ENCODE measurements at regions of chr14 and their contacts with region 1.

Region 1: DNA sequence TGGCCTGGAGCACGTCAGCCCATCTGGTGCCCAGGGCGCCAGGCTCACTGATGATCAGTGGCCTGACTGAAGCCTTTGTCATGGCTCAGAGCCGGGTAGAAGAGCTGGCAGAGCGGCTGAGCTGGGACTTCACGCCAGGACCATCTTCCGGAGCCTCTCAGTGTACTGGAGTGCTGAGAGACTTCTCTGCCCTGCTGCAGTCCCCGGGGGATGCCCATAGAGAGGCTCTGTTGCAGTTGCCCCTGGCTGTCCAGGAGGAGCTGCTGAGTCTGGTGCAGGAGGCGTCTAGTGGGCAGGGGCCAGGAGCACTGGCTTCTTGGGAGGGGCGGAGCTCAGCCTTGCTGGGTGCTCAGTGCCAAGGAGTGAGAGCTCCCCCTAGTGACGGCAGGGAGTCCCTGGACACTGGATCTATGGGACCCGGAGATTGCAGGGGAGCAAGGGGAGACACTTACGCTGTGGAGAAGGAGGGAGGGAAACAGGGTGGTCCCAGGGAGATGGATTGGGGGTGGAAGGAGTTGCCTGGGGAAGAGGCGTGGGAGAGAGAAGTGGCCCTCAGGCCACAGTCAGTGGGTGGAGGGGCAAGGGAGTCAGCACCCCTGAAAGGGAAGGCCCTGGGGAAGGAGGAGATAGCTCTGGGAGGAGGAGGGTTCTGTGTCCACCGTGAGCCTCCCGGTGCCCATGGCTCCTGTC is 2.0 kb downstream of the KHNYN start:
- DNase-seq: peak; percentile 95
- ATAC-seq: peak; percentile 62
- H3K4me3 Mint-ChIP-seq: peak overlapping the region; percentile 89
- H3K27ac Mint-ChIP-seq: peak overlapping the region; percentile 96
- H3K4me1 Mint-ChIP-seq: peaks cover 48% of the 10 kb centered on the region
- H3K27me3 Mint-ChIP-seq: no peaks in the 10 kb centered on the region

Region 2: DNA sequence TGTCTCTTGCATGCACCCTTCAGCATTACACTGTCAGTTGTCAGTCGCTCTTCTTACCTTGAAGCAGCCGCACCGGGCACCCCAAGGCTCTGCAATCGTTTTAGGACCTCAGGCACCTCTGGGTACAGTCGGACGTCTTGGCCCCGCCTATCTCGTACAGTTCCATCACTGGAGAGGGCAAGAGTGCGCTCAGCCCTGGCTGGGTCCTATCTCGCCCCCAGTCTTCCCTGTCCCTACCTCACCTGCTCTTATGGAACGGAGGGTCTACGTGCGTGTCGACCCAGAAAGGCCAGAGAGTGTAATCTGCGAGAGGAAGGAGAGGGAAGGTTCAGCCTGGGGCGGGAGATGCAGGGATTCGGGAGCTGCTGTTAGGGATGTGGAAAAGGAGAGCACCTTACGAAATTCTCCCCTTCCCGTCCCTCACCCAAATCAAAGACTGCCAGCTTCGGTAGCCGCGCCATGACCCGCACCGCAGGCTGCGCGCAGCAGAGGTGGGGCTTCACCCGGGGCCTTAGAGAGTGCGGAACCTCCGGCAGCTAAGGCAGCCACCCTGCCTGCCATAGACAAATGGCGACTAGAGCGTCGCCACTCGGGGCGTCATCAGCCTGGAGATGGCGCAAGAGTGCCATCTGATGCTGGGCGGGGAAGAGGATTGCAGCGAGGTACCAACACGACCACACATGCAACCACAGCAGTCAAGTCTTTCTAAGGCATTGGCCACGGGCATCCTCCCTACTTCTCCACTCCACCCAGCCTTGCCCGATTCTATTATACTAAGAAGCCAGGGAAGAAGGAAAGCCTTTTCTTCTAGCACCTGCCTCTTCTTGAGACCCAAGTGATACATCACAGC is 216.0 kb before region 1 on chr14 and contains the start of gene MDP1:
- CTCF ChIA-PET with region 1: interaction called, 12 read pairs
- DNase-seq: peak; percentile 94
- ATAC-seq: peak; percentile 76
- H3K4me3 Mint-ChIP-seq: peak within 1 kb of the TSS; percentile 97
- H3K27ac Mint-ChIP-seq: peak within 1 kb of the TSS; percentile 99
- H3K4me1 Mint-ChIP-seq: peaks cover 47% of the 10 kb centered on the region
- H3K27me3 Mint-ChIP-seq: no peaks in the 10 kb centered on the region
- total RNA-seq, gene MDP1: 11.4 to 16.9 TPM

Region 3: GRCh38 chr14:24271134-24271833 is 160.4 kb before region 1 on chr14 and contains the start of gene RABGGTA:
- CTCF ChIA-PET with region 1: interaction called, 18 read pairs
- DNase-seq: peak; percentile 92
- ATAC-seq: peak; percentile 92
- H3K4me3 Mint-ChIP-seq: peak within 1 kb of the TSS; percentile 84
- H3K27ac Mint-ChIP-seq: peak within 1 kb of the TSS; percentile 93
- H3K4me1 Mint-ChIP-seq: peaks cover 41% of the 10 kb centered on the region
- H3K27me3 Mint-ChIP-seq: no peaks in the 10 kb centered on the region
- total RNA-seq, gene RABGGTA: 34.3 to 44.6 TPM

Region 4: GRCh38 chr14:24310646-24311604 is 120.8 kb before region 1 on chr14 and contains the start of gene LTB4R:
- CTCF ChIA-PET with region 1: interaction called, 78 read pairs
- DNase-seq: peak; percentile 80
- ATAC-seq: peak; percentile 90
- H3K4me3 Mint-ChIP-seq: peak within 1 kb of the TSS; percentile 75
- H3K27ac Mint-ChIP-seq: peak within 1 kb of the TSS; percentile 87
- H3K4me1 Mint-ChIP-seq: peaks cover 72% of the 10 kb centered on the region
- H3K27me3 Mint-ChIP-seq: no peaks in the 10 kb centered on the region
- total RNA-seq, gene LTB4R: 15.6 to 32.5 TPM

Region 5: DNA sequence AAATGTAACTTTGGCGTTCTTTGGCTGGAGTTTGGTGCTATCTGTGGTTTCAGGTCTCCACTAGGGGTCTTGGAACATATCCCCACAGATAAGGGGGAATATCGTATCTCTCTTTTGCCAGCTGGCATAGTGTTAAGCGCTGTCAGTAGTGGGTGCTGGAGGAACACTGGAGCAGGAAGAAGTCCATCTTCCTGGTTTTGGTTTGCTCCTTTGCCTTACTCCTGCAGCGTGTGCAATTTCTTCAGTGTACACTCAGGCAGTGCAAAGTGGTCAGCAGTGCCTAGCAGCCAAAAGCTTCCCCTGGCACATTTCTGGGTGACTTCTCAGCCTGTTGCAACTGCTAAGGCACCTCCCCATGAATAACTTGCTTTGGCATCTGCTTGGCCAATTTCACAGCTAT is 80.2 kb before region 1 on chr14:
- CTCF ChIA-PET with region 1: interaction called, 10 read pairs
- DNase-seq: no peak
- ATAC-seq: no peak
- H3K4me3 Mint-ChIP-seq: no peak overlapping the region
- H3K27ac Mint-ChIP-seq: no peak overlapping the region
- H3K4me1 Mint-ChIP-seq: no peaks in the 10 kb centered on the region
- H3K27me3 Mint-ChIP-seq: peaks cover 55% of the 10 kb centered on the region

Region 6: DNA sequence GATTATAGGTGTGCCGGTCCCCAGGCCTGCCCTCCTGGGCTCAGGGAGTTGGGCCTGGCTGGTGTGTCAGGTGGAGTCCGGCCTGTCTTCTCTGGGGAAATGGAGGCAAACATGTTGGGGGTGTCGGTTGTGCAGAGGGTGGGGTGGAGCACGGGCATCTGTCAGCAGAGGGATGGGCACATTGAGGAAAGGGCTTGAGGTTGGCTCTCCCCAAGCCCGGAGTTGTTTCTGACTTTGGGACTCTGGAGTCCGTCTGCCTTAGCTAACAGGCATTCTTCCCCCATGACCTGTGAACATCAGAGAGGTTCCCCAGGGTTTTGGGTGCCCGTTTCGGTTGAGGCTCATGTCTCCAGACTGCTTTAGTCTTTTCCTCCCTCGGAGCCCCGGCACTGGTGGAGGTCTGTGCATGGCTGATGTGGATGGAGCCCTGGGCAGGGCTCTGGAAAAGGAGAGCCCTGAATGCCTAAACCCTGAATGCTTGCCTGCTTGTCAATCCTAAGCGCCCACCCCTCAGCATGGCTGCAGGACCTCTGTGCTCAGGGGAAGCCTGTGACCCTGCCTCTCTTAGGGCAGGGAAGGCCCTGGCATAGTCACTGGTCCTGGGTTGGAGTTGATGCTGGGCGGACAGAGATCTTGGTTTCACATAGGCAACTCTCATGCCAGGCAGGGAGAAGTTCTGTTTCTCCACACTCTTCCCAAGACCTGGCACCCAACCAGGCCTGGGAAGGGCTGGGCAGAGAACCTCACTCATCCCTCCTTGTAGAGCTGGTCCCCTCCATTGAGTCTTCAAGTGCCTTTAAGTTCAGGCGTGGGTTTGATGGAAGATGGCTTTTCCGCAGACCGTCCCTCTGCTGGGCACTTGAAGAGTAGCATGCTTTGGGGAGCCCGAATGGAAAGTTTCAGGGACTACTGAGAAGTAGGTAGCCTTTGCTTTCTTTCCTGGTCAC is 20.0 kb before region 1 on chr14:
- CTCF ChIA-PET with region 1: interaction called, 17 read pairs
- DNase-seq: no peak
- ATAC-seq: peak; percentile 73
- H3K4me3 Mint-ChIP-seq: no peak overlapping the region
- H3K27ac Mint-ChIP-seq: no peak overlapping the region
- H3K4me1 Mint-ChIP-seq: no peaks in the 10 kb centered on the region
- H3K27me3 Mint-ChIP-seq: no peaks in the 10 kb centered on the region

Region 7: GRCh38 chr14:24442273-24443052 is 10.7 kb after region 1 on chr14 and contains the start of gene SDR39U1:
- CTCF ChIA-PET with region 1: interaction called, 66 read pairs
- DNase-seq: peak; percentile 99
- ATAC-seq: peak; percentile 94
- H3K4me3 Mint-ChIP-seq: peak within 1 kb of the TSS; percentile 90
- H3K27ac Mint-ChIP-seq: peak within 1 kb of the TSS; percentile 98
- H3K4me1 Mint-ChIP-seq: peaks cover 53% of the 10 kb centered on the region
- H3K27me3 Mint-ChIP-seq: peaks cover 2% of the 10 kb centered on the region
- total RNA-seq, gene SDR39U1: 45.6 to 45.9 TPM

Region 8: GRCh38 chr14:24556756-24557155 is 125.0 kb after region 1 on chr14:
- CTCF ChIA-PET with region 1: no interaction called
- DNase-seq: no peak
- ATAC-seq: no peak
- H3K4me3 Mint-ChIP-seq: no peak overlapping the region
- H3K27ac Mint-ChIP-seq: no peak overlapping the region
- H3K4me1 Mint-ChIP-seq: no peaks in the 10 kb centered on the region
- H3K27me3 Mint-ChIP-seq: peaks cover 7% of the 10 kb centered on the region

Measured in activated CD8-positive, alpha-beta memory T cell treated with anti-CD3 and anti-CD28 coated beads, Interleukin-2, amount 10 ng/mL, durations not matched to agents 7 days and 5 days (primary cell).